Keratinocyte (primary cell): ENCODE measurements at regions of chr6 and their contacts with region 1.

Region 1: GRCh38 chr6:12890171-12890790 is 173.7 kb downstream of the PHACTR1 start:
- DNase-seq: no peak
- H3K4me3 ChIP-seq: no peak overlapping the region
- H3K27ac ChIP-seq: no peak overlapping the region
- H3K4me1 ChIP-seq: no peaks in the 10 kb centered on the region
- H3K27me3 ChIP-seq: no peaks in the 10 kb centered on the region
- CTCF ChIP-seq: peak; percentile 44 to 60 (median 53)

Region 2: GRCh38 chr6:12637960-12638641 is 252.2 kb before region 1 on chr6:
- dilution Hi-C with region 1: loop called (anchors 25 kb)
- DNase-seq: peak; percentile 11
- H3K4me3 ChIP-seq: no peak overlapping the region
- H3K27ac ChIP-seq: no peak overlapping the region
- H3K4me1 ChIP-seq: peaks cover 4% of the 10 kb centered on the region
- H3K27me3 ChIP-seq: no peaks in the 10 kb centered on the region
- CTCF ChIP-seq: peak; percentile 68 to 84 (median 75)